ENCODE measurements at regions of chr6 and their contacts with region 1.

Region 1: DNA sequence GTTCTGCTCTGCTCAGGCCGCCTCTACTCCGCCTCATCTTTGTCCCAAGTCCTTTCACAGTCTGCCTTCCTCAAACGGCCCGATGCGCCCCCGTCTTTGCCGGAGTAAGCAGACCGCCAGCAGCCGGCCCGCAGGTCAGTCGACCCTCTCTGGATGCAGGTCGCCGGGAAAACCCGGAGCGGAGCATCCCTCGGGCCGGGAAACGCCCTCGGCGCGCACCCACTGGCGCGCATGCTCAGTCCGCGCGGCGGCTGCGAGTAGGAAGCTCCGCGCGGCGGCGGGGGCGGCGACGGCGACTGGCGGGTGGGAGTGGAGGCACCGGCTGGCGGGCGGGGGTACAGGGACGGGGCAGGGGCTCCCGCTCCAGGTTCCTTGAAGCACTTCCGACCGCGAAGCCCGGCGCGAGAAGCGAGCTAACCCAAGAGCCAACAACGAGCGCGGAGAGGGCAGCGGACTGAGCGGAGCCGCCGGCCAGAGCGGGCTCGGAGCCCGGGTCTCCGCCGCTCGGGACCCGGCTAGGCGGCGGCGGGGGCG is at the start of gene LRRC1:
- DNase-seq: peak; percentile 95
- ATAC-seq: peak; percentile 50
- H3K4me3 ChIP-seq: peak within 1 kb of the TSS; percentile 86
- H3K27ac ChIP-seq: peak within 1 kb of the TSS; percentile 66
- H3K4me1 ChIP-seq: peaks cover 27% of the 10 kb centered on the region
- H3K27me3 ChIP-seq: no peaks in the 10 kb centered on the region
- CTCF ChIP-seq: no peak
- total RNA-seq, gene LRRC1: 18.1 and 19.4 TPM in 2 replicates

Region 2: GRCh38 chr6:53673162-53673683 is 121.6 kb before region 1 on chr6:
- CTCF ChIA-PET with region 1: no interaction called
- POLR2A ChIA-PET with region 1: no interaction called
- intact Hi-C with region 1: no loop called
- DNase-seq: peak; percentile 98
- ATAC-seq: peak; percentile 66
- H3K4me3 ChIP-seq: peak overlapping the region; percentile 28; the same call in 1 of the 2 replicates
- H3K27ac ChIP-seq: peak overlapping the region; percentile 52
- H3K4me1 ChIP-seq: peaks cover 22% of the 10 kb centered on the region
- H3K27me3 ChIP-seq: no peaks in the 10 kb centered on the region
- CTCF ChIP-seq: no peak

Region 3: DNA sequence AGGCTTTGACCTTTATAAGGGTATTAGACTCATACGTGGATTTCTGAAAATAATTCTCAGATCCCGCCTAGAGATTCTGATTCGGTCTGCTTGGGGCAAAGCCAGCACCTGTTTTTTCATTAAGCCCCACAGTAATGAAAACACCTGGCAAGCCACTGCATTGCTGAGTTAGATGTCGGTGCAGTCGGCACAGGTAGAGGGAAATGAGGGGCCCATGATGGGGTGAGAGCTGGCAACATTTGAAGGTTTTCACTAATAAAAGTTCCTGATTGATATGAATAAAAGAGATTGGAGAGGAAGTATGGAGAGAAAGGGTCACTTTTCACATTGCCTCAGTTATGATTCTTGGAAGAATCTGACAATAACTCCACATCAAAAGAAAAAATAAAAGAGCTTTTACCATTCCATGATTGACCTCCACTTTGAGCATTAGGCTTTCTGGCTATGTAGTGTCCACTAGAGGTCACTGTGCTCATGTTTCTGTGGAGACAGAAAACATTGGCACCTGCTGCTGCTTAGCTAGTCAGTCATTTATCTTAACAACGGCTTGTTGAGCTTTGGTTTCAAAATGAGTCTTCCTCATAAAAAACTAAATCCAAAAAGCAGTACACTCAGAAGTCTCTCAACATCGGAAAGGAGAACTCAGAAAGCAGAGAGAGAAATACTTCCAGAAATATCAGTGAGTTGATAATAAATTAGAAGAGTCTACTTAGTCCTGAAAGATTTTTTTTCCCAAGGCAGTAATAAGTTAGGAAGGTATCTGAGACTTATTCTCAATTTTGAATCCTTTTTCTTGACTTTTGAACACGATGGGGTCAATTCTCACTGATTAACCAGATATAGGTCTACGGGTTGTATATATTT is 76.0 kb before region 1 on chr6:
- CTCF ChIA-PET with region 1: interaction called, 17 read pairs
- POLR2A ChIA-PET with region 1: interaction called, 4 read pairs
- intact Hi-C with region 1: no loop called
- DNase-seq: peak; percentile 88
- ATAC-seq: peak; percentile 93
- H3K4me3 ChIP-seq: no peak overlapping the region
- H3K27ac ChIP-seq: no peak overlapping the region
- H3K4me1 ChIP-seq: peaks cover 15% of the 10 kb centered on the region
- H3K27me3 ChIP-seq: no peaks in the 10 kb centered on the region
- CTCF ChIP-seq: peak; percentile 94

Region 4: DNA sequence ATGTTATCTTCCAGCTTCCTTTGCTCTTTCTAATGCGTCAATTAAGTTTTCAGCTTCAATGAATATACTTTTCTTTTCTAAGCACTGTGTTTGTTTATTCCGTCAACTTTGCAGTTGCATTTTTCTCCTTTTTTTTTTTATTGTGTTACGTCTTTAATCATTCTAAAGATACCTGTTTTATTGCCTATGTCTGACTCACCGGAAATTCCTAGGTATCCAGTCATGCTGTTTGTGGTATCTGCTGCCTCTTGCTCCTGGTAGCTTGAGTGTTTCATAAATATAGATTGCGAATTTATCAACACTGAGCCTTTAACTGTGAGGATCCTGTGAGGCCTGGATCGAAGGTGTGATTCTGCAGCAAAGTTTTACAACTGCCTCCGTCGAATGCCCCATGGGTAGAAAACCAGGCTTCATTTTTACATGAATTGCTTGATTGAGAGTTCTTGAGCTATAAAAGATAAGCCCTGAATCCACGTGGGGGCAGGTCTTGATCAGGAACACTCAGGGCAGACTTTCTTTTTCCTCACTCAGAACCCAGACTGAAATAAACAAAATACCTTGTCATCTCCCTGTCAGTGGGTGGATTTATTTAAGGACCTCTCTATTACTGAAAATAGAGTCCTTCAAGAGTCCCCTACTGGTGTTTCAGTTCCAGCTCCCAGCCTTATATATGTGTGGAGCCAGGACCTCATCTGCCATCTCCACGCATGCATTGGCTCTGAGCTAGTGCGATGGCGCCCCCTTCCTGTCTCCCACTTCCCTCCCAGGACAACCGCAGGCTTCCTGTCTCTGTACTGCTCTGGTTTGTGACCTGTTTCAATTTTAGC is 60.1 kb before region 1 on chr6:
- CTCF ChIA-PET with region 1: interaction called, 22 read pairs
- POLR2A ChIA-PET with region 1: interaction called, 5 read pairs
- intact Hi-C with region 1: loop called (anchors 1 kb)
- DNase-seq: peak; percentile 94
- ATAC-seq: peak; percentile 92
- H3K4me3 ChIP-seq: peak overlapping the region; percentile 37
- H3K27ac ChIP-seq: peak overlapping the region; percentile 74
- H3K4me1 ChIP-seq: peaks cover 32% of the 10 kb centered on the region
- H3K27me3 ChIP-seq: no peaks in the 10 kb centered on the region
- CTCF ChIP-seq: peak; percentile 80

Region 5: DNA sequence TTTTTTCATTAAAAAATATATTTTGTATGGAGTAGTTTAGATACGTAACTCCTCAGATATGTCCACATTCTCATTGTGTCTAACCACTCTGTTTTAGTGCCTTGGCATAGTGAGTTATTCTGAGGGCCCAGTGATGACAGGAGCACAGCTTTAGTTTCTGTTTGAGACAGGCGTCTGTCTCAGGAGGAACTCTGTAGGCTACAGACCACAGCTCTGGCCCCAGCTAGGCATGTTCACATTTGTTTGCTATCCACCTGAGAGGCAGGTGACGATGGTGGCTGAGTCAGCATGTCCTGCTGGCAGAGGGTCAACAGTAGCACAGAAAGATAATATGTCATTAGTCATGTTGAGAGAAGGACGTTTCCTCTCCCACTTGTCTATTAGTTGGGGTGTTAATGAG is 16.3 kb after region 1 on chr6:
- CTCF ChIA-PET with region 1: no interaction called
- POLR2A ChIA-PET with region 1: interaction called, 3 read pairs
- intact Hi-C with region 1: loop called (anchors 2 kb)
- DNase-seq: peak; percentile 95
- ATAC-seq: peak; percentile 87
- H3K4me3 ChIP-seq: peak overlapping the region; percentile 33
- H3K27ac ChIP-seq: peak overlapping the region; percentile 36
- H3K4me1 ChIP-seq: peaks cover 40% of the 10 kb centered on the region
- H3K27me3 ChIP-seq: no peaks in the 10 kb centered on the region
- CTCF ChIP-seq: no peak

Region 6: DNA sequence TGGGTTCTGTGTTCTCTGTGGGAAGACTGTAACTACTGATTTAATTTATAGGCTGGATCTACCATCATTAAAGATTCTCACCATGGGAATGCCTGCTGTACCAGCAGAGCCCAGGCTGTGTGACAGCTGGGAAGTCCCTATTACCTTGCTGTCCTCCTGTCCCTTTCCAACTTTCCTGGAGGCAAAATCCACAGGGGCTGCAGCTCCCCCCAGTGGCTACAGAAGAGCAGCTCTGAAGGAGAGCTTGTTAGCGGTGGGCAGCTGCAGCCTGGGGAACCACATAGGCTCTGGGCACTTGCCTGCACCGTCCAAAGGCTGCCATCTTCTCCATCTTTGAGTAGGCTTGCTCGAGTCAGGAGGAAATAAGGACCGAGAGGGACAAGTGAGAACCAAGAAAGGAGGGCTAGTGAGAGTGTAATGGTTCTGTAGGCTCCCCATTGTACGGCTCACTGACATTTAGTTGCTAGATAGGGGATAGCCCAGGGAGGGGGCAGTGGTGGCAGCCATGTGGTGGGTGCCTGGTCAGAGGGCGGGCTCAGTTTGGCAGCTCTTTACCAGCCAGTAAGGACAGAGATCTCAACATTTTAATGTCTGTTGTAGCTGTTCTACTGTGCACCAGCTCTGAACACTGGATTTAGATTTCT is 161.4 kb after region 1 on chr6:
- CTCF ChIA-PET with region 1: interaction called, 42 read pairs
- POLR2A ChIA-PET with region 1: interaction called, 6 read pairs
- intact Hi-C with region 1: loop called (anchors 1 kb)
- DNase-seq: peak; percentile 89
- ATAC-seq: peak; percentile 89
- H3K4me3 ChIP-seq: no peak overlapping the region
- H3K27ac ChIP-seq: no peak overlapping the region
- H3K4me1 ChIP-seq: peaks cover 20% of the 10 kb centered on the region
- H3K27me3 ChIP-seq: no peaks in the 10 kb centered on the region
- CTCF ChIP-seq: peak; percentile 94

Measured in PC-3 (cell line).